ENCODE measurements at regions of chr19 and their contacts with region 1.

Region 1: DNA sequence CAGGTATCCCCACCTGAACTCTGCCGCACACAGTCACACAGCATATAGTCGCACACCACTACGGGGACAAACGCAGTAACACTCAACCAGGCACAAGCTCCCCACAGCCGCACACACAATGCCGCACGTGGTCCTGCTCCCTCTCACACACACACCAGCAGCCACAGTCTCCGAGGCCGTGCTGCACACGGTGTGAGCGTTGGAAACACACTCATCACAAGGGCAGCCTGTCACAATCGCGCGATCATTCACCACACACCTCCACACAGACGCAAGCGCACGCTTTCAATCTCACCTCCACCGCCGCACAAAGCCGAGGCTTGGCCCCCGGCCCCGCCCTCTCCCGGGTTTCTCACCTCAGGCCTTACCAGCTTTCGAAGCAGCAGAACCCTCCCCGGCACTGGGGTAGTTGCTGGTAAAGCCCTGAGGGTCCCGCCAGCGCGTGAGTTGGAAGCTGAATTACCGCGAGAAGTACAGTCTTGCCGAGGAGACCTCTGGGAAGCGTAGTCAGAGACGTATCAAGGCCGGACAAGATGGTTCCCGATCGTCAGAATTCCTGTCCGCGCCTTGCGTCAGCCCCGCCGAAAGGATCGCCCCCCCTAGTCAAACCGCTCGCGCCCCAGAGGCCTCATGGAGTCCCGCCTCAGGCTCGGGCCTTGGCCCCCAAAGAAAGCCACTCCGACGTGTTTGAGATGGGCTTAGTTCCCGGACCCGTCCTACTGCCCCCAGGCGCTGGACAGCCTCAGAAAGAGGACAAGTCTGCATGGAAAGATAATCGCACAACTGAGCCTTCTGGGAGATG is at the start of gene ZNF566:
- DNase-seq: peak; percentile 94
- H3K4me3 ChIP-seq: peak within 1 kb of the TSS; percentile 67 to 81 (median 72)
- H3K27ac ChIP-seq: peak within 1 kb of the TSS; percentile 91 to 96 (median 94)
- H3K4me1 ChIP-seq: peaks cover 0 to 20% (median 15%) of the 10 kb centered on the region in 4 donors
- H3K27me3 ChIP-seq: no peaks in the 10 kb centered on the region
- CTCF ChIP-seq: no peak
- EP300 ChIP-seq: no peak
- POLR2A ChIP-seq: peak in 1 of 2 donors; percentile 12
- total RNA-seq, gene ZNF566: 15.5 to 21.6 (median 18.4) TPM

Region 2: GRCh38 chr19:36198119-36198518 is 291.2 kb before region 1 on chr19:
- intact Hi-C with region 1: loop called (anchors 10 kb)
- DNase-seq: no peak
- H3K4me3 ChIP-seq: no peak overlapping the region
- H3K27ac ChIP-seq: peak overlapping the region in 1 of 4 donors; percentile 26
- H3K4me1 ChIP-seq: no peaks in the 10 kb centered on the region
- H3K27me3 ChIP-seq: no peaks in the 10 kb centered on the region
- CTCF ChIP-seq: no peak
- EP300 ChIP-seq: no peak
- POLR2A ChIP-seq: no peak

Region 3: DNA sequence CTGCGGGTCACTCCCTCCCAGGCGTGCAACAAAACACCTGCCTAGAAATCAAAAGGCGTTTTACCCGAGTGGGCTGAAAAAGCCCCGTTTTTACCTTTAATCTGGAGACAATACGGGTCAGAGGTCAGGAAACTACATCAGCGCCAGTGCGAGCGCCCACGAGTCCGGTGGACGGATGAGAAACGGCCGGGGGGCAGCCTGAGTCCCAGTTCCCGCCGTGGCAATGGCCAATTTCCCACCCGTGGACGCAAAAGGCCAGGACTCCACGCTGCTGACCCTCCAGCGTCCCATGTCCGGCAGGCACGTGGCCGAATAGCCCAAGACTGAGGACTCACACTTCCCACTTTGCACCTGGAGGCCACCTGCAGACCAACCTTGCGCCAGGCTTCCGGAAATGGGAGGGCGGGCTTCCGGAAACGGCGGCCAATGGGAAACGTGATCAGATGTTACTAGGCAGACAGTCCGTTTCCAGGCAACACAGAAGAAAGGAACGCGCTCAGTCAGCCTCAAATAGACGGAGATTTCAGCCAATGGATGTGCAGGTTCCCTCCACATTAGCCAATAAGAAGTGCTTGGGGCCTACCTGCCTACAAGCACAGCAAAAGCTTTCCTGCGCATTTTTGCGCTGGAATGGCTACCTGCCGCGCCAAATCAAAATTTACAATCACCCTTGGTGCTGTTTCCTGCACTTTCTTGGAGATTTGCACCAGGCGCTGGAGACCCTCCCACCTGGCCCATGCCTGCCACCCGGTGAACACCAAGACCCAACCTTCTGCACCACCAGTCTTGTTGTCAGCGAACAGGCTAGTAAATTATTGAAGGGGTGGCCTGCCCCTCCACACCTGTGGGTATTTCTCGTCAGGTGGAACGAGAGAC is 157.7 kb before region 1 on chr19:
- intact Hi-C with region 1: loop called (anchors 5 kb)
- DNase-seq: peak; percentile 91
- H3K4me3 ChIP-seq: peak overlapping the region; percentile 57 to 75 (median 69)
- H3K27ac ChIP-seq: peak overlapping the region in 3 of 4 donors; percentile 24 to 61 (median 58)
- H3K4me1 ChIP-seq: peaks cover 0 to 17% (median 7%) of the 10 kb centered on the region in 4 donors
- H3K27me3 ChIP-seq: no peaks in the 10 kb centered on the region
- CTCF ChIP-seq: peak in 1 of 4 experiments; percentile 20
- EP300 ChIP-seq: no peak
- POLR2A ChIP-seq: no peak

Region 4: DNA sequence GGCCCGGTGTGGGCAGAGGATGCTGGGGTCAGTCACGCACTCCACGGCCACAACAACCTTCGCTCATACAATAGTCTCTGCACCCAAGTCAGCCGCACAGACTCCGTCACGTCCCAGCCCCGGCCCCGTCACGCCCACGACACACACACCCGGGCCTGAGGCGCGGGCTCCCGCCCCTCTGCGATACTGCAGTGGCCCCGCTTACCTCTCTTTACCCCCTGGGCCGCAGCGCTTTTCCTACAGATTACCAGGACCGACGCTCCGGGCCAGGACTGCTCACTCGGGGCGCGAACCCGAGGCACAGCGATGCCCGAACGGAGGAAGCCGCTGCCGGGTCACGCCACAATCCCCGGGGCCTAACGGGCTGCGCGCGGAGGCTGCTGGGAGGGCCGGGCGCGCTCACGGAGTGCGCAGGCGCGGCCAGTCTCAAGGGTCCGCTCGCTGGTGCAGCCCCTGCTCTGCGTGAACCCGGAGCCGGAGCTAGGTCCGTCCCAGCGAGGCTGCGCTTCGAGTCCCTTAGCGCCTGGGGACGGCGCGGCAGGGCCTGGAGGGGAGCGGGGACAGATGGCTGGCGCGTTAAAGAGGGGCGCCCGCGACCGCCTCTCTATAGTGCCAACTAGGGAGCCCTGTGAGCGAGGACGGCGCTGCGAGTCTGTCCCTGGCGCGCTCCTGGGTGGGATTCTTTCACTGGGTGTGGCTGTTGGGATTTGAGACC is 70.9 kb before region 1 on chr19 and contains the start of gene ZFP82:
- intact Hi-C with region 1: loop called (anchors 2 kb)
- DNase-seq: peak; percentile 85
- H3K4me3 ChIP-seq: peak within 1 kb of the TSS; percentile 63 to 82 (median 70)
- H3K27ac ChIP-seq: peak within 1 kb of the TSS; percentile 92 to 97 (median 93)
- H3K4me1 ChIP-seq: peaks cover 0 to 25% (median 20%) of the 10 kb centered on the region in 4 donors
- H3K27me3 ChIP-seq: peaks cover 0 to 4% (median 3%) of the 10 kb centered on the region in 3 donors
- CTCF ChIP-seq: no peak
- EP300 ChIP-seq: no peak
- POLR2A ChIP-seq: peak; percentile 35 to 63
- total RNA-seq, gene ZFP82: 4.8 to 8.2 (median 6.9) TPM

Region 5: DNA sequence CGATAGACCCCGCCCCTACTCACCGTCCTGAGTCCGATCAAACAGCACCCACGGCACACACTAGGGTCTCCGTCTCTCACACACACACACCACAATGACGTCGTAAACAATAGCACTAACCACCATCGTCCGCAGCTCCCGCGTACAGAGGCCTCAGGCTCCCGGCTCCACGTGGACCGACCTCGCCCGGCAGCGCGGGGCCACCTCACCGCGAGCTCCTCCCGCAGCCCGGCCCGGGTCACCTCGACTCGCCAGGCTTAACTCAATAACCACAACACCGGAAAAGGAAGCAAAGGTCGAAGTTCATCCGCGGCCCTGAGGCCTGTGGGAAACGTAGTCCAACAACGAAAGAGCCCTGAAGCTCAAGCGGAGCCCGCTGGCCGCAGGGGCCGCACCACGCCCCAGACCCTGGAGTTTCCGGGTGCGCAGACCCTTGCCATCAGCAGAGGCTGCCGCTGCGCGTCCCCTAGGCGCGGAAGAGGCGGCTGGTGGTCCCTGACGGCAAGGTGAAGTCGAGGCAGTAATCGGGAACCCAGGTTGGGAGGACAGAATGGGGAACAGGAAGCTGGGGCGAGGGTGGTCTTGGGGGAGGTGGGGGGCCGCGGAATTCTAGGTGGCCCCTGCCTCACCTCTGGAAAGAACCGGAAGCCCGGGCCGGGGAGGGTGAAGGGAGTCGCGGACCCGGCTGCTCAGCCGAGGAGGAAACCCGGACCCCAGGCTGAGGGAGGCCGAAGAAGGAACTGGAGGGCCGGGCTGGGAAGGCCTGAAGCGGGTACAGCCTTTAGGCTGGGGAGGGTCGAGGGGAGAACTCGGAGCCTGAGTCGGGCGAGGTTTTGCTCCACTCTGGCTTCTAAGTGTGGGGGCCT is 83.9 kb after region 1 on chr19 and contains the start of gene ZNF529:
- intact Hi-C with region 1: loop called (anchors 5 kb)
- DNase-seq: peak; percentile 91
- H3K4me3 ChIP-seq: peak within 1 kb of the TSS; percentile 62 to 93 (median 86)
- H3K27ac ChIP-seq: peak within 1 kb of the TSS; percentile 79 to 89 (median 84)
- H3K4me1 ChIP-seq: peaks cover 0 to 24% (median 18%) of the 10 kb centered on the region in 4 donors
- H3K27me3 ChIP-seq: no peaks in the 10 kb centered on the region
- CTCF ChIP-seq: no peak
- EP300 ChIP-seq: no peak
- POLR2A ChIP-seq: peak; percentile 43 to 54
- total RNA-seq, gene ZNF529: 14.2 to 25.2 (median 20.2) TPM

Region 6: GRCh38 chr19:36652958-36653357 is 163.6 kb after region 1 on chr19:
- intact Hi-C with region 1: no loop called
- DNase-seq: no peak
- H3K4me3 ChIP-seq: no peak overlapping the region
- H3K27ac ChIP-seq: no peak overlapping the region
- H3K4me1 ChIP-seq: no peaks in the 10 kb centered on the region
- H3K27me3 ChIP-seq: no peaks in the 10 kb centered on the region
- CTCF ChIP-seq: no peak
- EP300 ChIP-seq: no peak
- POLR2A ChIP-seq: no peak

Measured in sigmoid colon (tissue), 7 donors.